Calu3 (cell line): ENCODE measurements at regions of chr1 and their contacts with region 1.

Region 1: DNA sequence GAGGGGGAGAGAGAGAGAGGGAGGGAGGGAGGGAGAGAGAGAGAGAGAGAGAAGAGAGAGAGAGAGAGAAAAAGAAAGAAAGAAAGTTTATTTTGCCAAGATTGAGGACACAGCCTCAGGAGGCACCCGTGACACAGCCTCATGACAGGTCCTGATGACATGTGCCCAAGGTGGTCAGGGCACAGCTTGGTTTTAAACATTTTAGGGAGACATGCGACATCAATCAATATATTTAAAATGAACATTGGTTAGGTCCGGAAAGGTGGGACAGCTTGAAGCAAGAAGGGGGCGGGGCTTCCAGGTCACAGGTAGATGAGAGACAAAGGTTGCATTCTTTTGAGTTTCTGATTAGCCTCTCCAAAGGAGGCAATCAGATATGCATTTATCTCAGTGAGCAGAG is 15.6 kb downstream of the S100A6 start:
- DNase-seq: peak; percentile 84
- H3K4me3 Mint-ChIP-seq: peak overlapping the region; percentile 33
- H3K27ac Mint-ChIP-seq: peak overlapping the region; percentile 69
- H3K4me1 Mint-ChIP-seq: peaks cover 49% of the 10 kb centered on the region
- H3K27me3 Mint-ChIP-seq: no peaks in the 10 kb centered on the region
- CTCF ChIP-seq: no peak

Region 2: DNA sequence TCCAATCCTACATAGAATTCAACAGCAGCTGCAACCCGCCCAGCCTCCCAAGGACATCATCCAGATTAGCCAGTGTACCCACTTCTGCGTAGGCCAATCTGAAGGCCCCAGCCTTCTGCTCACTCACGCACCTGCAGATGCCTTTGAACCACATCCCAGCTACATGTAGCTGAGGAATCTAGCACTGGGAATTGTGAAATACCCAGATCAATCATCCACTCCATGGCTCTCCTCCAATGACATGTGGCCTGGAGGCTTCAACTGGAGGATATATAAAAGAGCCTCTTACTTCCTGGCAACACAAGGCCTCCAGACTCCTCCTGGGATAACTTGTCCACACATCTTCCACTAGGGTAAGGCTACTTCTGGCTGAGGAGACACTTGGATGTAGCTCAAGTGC is 677.7 kb before region 1 on chr1 and contains the start of gene LCE6A:
- CTCF ChIA-PET with region 1: no interaction called
- intact Hi-C with region 1: no loop called
- DNase-seq: no peak
- H3K4me3 Mint-ChIP-seq: no peak within 1 kb of the TSS
- H3K27ac Mint-ChIP-seq: no peak within 1 kb of the TSS
- H3K4me1 Mint-ChIP-seq: no peaks in the 10 kb centered on the region
- H3K27me3 Mint-ChIP-seq: peaks cover 59% of the 10 kb centered on the region
- CTCF ChIP-seq: no peak
- total RNA-seq, gene LCE6A: not detected in 2 replicates

Region 3: DNA sequence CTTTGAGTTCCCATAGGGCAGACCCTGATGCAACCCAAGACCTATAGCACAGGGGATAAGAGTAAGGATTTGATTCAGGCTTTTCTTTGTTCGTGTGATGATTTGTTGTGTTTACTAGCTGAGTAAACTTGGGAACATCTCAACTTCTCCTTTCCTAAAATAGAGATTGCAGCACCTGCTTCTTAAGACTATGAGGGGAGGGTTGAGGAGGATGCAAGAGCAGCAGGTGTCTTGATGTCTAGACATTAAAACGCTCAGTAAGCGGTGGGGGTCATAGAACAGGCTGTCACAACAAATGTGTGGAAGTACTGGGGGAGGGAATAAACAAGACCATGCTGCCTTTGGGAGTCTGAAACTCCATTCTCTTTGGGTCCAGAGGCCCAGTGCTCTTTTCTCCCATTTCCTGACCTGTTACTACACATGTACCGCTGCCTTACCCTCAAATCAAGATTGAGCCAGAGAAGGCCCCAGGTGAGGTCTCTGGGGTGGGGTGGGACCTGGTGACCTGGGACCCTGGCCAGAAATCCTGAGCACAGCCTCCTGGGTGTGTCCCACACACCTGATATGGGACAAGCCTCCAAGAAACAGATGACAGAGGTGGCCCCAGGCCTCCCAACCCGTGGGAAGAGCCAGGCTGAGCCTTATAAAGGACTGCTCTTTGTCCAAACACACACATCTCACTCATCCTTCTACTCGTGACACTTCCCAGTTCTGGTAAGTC is 104.2 kb before region 1 on chr1 and contains the start of gene S100A7A:
- CTCF ChIA-PET with region 1: no interaction called
- intact Hi-C with region 1: no loop called
- DNase-seq: no peak
- H3K4me3 Mint-ChIP-seq: no peak within 1 kb of the TSS
- H3K27ac Mint-ChIP-seq: no peak within 1 kb of the TSS
- H3K4me1 Mint-ChIP-seq: no peaks in the 10 kb centered on the region
- H3K27me3 Mint-ChIP-seq: peaks cover 81% of the 10 kb centered on the region
- CTCF ChIP-seq: no peak
- total RNA-seq, gene S100A7A: not detected in 2 replicates

Region 4: GRCh38 chr1:153599847-153600246 is 79.6 kb after region 1 on chr1:
- CTCF ChIA-PET with region 1: no interaction called
- intact Hi-C with region 1: no loop called
- DNase-seq: no peak
- H3K4me3 Mint-ChIP-seq: no peak overlapping the region
- H3K27ac Mint-ChIP-seq: no peak overlapping the region
- H3K4me1 Mint-ChIP-seq: no peaks in the 10 kb centered on the region
- H3K27me3 Mint-ChIP-seq: no peaks in the 10 kb centered on the region
- CTCF ChIP-seq: no peak

Region 5: DNA sequence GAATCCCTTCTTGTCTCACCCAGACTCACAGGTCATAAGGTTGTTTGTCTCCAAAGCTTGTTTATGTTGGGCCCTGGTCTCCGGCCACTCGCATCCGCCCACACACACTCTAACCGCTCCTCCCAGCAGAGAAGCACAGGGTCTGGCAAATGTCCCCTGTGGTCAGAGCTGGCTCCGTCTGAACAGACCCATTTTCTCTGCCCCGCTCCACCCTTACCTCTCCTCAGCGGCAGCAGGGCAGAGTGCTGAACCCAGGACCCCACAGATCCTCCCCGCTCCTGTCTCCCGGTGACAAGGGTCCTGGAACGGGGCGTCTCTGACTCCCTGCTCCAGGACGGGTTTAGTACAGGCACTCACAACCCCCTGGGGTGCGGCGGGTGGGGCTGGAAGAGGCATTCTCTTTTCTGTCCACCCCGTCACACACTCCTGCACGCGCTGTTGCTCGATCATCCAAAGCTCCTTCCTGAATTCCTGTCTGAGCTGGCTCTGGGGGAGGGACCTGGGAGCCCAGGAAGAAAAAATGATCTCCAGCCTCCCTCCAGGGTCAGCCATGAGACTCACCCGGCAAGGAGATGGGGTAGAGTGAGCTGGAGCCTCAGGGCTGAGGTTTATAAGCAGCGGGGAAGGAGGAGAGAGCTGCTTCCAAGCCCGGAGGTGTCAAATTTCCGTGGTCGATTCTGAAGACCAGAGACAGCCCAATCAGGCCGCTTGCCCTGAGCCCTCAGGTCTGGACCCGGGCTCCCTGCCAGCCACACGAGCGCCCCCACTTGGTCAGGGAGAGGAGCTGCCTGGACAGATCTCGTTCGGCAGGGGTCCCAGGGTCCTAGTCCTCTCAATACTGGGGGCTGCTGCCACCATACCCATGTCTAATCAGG is 106.9 kb after region 1 on chr1 and contains the start of gene S100A13:
- CTCF ChIA-PET with region 1: interaction called, 10 read pairs
- intact Hi-C with region 1: no loop called
- DNase-seq: peak; percentile 93
- H3K4me3 Mint-ChIP-seq: peak within 1 kb of the TSS; percentile 82
- H3K27ac Mint-ChIP-seq: peak within 1 kb of the TSS; percentile 81
- H3K4me1 Mint-ChIP-seq: peaks cover 39% of the 10 kb centered on the region
- H3K27me3 Mint-ChIP-seq: no peaks in the 10 kb centered on the region
- CTCF ChIP-seq: peak; percentile 90
- total RNA-seq, gene S100A13: 104 and 117 TPM in 2 replicates